Cardiac septum (tissue), 1 donor: ENCODE measurements at regions of chr18 and their contacts with region 1.

Region 1: GRCh38 chr18:64330161-64330560 is 181.3 kb upstream of the LINC00305 start:
- DNase-seq: no peak

Region 2: DNA sequence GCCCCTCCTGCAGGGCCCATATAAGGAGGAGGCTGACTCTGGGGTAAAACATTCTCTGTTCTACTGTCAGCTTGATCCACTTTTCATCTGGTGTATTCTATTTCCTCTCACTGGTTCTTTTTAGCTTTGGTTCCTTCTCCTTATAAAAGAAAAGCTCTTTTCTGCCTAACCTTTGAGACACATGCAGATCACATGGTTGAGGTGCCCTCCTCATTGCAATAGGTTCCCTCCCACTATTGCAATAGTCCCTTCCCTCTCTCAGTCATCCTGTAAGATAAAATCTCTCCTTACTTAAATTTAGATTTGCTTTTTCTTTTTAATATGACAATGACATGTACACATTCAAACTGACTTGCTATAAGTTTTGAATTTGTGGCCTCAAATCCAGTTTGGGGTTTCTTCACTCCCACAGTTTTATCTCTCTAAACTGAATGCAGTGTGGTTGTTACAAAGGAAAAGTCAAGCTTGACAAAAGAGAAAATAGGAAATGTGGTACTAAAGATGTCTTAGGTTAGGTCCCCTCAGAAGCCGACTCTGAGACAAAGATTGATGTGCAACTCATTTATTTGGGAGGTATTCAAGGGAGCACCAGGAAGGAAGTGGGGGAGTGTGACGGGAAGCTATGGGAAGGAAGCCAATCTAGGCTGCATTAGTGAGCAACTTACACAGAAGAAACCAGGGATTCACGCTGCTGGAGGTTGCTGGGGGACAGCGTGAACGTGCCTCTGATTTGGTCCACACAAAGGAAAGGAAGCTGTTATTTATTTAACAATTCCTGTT is 53.7 kb before region 1 on chr18:
- intact Hi-C with region 1: loop called (anchors 5 kb)
- DNase-seq: no peak

Region 3: DNA sequence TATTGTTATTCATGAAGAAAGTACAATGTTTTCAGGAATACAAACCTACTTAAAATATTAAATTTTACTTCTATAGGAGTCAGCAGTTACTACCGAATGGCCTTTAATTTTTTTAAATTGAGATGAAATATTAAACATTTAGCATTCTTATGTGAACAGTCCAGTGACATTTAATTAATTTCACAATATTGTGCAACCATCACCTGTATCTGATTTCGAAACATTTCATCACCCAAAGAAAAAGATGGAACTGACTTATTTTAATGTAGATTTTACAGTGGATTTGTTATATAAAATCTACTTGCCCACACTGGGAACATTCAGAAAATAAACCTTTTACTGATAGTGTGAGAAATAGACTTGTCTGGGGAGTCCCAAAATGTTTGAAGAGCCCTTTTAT is 403.9 kb after region 1 on chr18:
- intact Hi-C with region 1: no loop called
- DNase-seq: no peak